A673 (cell line): ENCODE measurements at regions of chr1 and their contacts with region 1.

Region 1: GRCh38 chr1:183598386-183598785 is 8.1 kb upstream of the NCF2 start:
- DNase-seq: no peak
- H3K4me3 ChIP-seq: no peak overlapping the region
- H3K27ac ChIP-seq: no peak overlapping the region
- H3K4me1 ChIP-seq: no peaks in the 10 kb centered on the region
- H3K27me3 ChIP-seq: no peaks in the 10 kb centered on the region
- CTCF ChIP-seq: no peak

Region 2: DNA sequence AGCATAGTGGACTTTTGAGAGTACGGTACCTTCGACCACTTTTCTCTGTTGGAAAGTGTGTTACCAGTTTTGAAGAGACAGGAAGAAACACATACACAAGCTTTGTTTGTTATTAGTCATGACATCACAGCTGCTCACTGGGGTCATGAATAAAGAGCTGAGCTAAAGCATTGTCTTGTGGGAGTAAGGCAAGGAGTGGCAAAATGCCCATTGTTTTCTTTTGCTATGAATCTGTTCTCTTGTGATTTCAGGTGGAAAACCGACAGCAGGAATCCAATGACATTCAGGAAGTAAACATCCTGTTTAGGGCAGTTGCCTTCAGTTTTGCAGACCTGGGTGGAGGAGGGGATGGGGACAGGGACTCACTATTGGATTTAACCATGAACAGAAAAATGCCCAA is 272.8 kb after region 1 on chr1:
- CTCF ChIA-PET with region 1: no interaction called
- POLR2A ChIA-PET with region 1: interaction called, 10 read pairs
- intact Hi-C with region 1: no loop called
- DNase-seq: peak; percentile 54
- H3K4me3 ChIP-seq: no peak overlapping the region
- H3K27ac ChIP-seq: peak overlapping the region; percentile 78
- H3K4me1 ChIP-seq: peaks cover 71% of the 10 kb centered on the region
- H3K27me3 ChIP-seq: no peaks in the 10 kb centered on the region
- CTCF ChIP-seq: no peak